Cardiac septum (tissue), 1 donor: ENCODE measurements at regions of chr9 and their contacts with region 1.

Region 1: GRCh38 chr9:132235946-132236661 is 74.2 kb downstream of the NTNG2 start:
- DNase-seq: peak; percentile 92

Region 2: GRCh38 chr9:131707733-131708157 is 528.4 kb before region 1 on chr9:
- intact Hi-C with region 1: no loop called
- DNase-seq: no peak

Region 3: GRCh38 chr9:131762356-131762932 is 473.7 kb before region 1 on chr9:
- intact Hi-C with region 1: loop called (anchors 5 kb)
- DNase-seq: peak; percentile 87

Region 4: DNA sequence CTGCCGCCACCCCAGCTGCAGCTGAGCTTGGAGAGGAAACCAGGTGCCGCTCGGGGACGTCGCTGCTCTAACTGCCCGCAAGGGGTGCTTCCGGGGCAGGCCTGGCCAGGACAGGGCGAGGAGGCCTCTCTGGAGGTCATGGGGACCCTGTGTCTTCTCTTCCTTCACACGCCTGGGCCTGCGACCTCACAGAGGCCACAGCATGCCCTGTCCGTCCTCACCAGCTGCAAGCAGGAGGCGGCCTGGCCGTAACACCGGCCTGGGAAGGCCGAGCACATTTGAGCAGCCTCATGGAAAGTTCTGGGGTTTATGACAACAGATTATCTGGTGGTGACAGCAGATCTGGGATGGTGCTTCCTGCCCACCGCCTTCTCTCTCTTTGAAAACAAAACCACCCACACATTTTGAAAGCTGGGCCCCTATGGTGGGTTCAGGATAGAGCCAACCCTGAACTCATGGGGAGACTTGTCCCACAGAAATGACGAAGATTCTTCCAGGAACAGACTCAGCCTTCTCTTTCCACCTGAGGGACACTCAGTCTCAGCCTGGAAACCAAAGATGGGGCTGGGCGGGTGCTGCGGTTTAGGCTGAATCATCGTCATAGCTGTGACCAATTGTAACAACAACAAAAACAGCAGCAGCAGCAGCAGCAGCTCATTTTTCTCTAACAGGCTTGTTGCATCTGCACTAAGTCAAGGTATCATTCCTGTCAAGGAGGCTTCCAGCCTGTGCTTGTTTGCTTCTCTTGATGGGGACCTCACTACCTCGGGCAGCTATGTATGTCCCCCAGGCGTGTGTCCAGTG is 396.6 kb before region 1 on chr9:
- intact Hi-C with region 1: loop called (anchors 5 kb)
- DNase-seq: no peak

Region 5: GRCh38 chr9:132079391-132080091 is 156.6 kb before region 1 on chr9 and contains the start of gene MED27:
- intact Hi-C with region 1: loop called (anchors 5 kb)
- DNase-seq: peak; percentile 95
- total RNA-seq, gene MED27: 19.2 TPM

Region 6: GRCh38 chr9:132169672-132170392 is 66.3 kb before region 1 on chr9:
- intact Hi-C with region 1: loop called (anchors 5 kb)
- DNase-seq: peak; percentile 85

Region 7: GRCh38 chr9:132354637-132355355 is 118.7 kb after region 1 on chr9 and contains the start of gene SETX:
- intact Hi-C with region 1: no loop called
- DNase-seq: peak; percentile 99
- total RNA-seq, gene SETX: 30.0 TPM